ENCODE measurements at regions of chr2 and their contacts with region 1.

Region 1: DNA sequence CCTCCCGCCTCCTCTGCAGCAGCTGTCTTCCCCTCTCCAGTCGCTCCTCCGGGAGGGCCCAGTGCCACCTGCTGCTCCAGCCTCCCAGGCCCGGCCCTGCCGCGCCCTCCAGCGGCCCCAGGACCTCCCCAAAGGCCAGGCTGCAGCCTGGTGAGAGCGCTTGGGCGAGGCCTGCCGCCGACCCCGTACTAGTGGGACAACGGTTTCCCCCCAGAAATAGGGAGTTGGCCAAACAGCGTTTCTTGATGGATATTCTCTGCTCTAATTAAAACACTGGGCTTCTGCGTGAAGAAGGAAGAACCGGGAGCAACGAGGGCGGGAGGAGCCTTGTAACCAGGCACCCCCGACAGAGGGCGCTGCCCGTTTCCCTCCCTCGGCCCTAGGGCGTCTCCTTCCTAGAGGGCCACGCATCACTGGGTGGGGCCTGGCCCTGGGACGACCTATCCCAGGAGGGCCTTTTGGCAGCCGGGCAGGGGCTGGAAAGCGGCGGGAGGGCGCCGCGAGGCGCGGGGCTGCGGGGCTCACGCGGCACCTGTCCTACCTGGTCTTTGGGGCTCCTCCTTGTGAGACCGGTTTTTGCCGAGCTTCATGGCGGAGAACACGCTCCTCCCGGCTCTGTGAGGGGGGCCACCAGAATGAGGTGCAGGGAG is 25.4 kb upstream of the OTOF start:
- DNase-seq: peak; percentile 20 to 70
- ATAC-seq: peak; percentile 83 to 92
- H3K4me3 ChIP-seq: peak overlapping the region; percentile 37 to 66 (median 51)
- H3K27ac ChIP-seq: peak overlapping the region in 2 of 4 donors; percentile 40 to 48
- H3K4me1 ChIP-seq: peaks cover 3 to 10% of the 10 kb centered on the region in 2 donors
- H3K27me3 ChIP-seq: no peaks in the 10 kb centered on the region
- CTCF ChIP-seq: peak; percentile 65 to 87 (median 85)
- POLR2A ChIP-seq: no peak

Region 2: GRCh38 chr2:26359886-26360473 is 143.4 kb before region 1 on chr2:
- in situ Hi-C with region 1: no loop called
- intact Hi-C with region 1: loop called (anchors 2 kb)
- DNase-seq: no peak
- ATAC-seq: peak in 1 of 2 donors; percentile 26
- H3K4me3 ChIP-seq: no peak overlapping the region
- H3K27ac ChIP-seq: peak overlapping the region in 1 of 4 donors; percentile 7
- H3K4me1 ChIP-seq: peaks cover 27 to 33% of the 10 kb centered on the region in 2 donors
- H3K27me3 ChIP-seq: no peaks in the 10 kb centered on the region
- CTCF ChIP-seq: no peak
- POLR2A ChIP-seq: no peak

Region 3: DNA sequence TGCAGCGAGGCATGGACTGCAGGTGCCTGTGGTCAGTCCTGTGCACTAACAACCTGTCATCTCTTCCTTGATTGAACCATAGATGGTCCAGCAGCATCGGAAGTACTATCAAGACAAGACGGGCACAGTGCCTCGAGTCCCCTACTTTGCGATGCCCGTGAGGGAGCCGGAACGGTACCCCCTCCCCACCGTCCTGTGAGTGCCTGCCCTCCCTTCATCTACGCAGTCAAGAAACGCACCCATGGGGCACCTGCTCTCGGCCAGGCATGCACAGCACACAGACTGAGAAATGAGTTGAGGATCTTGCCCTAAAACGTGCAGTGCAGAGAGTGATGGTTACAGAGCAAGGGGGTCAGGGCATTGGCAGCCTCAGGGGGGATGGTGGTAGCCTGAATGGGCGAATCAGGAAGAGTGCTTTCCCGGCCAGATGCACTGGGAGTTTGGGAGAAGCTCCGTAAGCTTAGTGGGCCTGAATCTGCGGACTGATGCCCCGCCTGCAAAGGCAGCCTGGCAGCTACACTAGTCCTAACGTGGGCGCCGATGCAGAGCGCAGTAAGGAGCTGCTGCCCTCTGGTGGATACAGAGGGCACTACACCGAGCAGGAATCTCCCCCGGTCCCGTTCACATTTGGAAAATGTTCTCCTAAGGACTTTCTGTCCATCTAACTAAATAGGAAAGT is 74.2 kb after region 1 on chr2:
- in situ Hi-C with region 1: no loop called
- intact Hi-C with region 1: loop called (anchors 1 kb)
- DNase-seq: peak; percentile 29 to 42
- ATAC-seq: peak; percentile 80 to 95
- H3K4me3 ChIP-seq: no peak overlapping the region
- H3K27ac ChIP-seq: no peak overlapping the region
- H3K4me1 ChIP-seq: no peaks in the 10 kb centered on the region
- H3K27me3 ChIP-seq: no peaks in the 10 kb centered on the region
- CTCF ChIP-seq: peak; percentile 84 to 98 (median 89)
- POLR2A ChIP-seq: no peak

Region 4: DNA sequence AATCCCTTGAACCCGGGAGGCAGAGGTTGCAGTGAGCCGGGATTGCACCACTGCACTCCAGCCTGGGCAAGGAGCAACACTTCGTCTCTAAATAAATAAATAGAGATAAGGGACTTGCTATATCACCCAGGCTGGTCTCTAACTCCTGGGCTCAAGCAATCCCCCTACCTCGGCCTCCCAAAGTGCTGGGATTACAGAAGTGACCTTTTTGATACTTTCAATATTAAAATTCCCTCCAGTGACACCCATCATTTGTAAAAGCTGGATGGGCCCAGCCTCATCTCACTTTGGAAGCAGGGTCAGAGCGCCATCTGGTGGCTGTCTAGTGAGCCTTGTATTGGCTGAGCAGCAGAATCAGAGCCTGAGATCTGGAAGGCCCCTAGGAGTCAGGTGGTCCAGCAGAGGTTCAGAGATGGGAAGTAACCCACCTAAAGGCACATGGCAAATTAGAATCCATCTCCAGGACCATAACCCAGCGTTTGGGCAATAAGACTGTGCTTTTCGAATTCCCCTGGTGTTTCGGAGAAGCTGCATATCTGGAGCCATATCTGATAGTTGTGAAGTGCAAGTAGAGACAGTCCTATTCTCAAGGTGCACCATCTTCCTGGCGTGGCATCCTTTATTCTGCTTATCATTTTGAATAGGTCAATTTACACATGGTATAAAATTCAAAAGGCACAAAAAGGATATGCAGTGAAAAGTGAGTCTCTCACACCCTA is 242.4 kb after region 1 on chr2:
- in situ Hi-C with region 1: no loop called
- intact Hi-C with region 1: loop called (anchors 5 kb)
- DNase-seq: peak; percentile 50 to 69
- ATAC-seq: peak; percentile 81 to 85
- H3K4me3 ChIP-seq: no peak overlapping the region
- H3K27ac ChIP-seq: no peak overlapping the region
- H3K4me1 ChIP-seq: peaks cover 0 to 8% of the 10 kb centered on the region in 2 donors
- H3K27me3 ChIP-seq: no peaks in the 10 kb centered on the region
- CTCF ChIP-seq: peak; percentile 80 to 94 (median 91)
- POLR2A ChIP-seq: no peak

Region 5: GRCh38 chr2:27185331-27186026 is 682.1 kb after region 1 on chr2:
- in situ Hi-C with region 1: no loop called
- intact Hi-C with region 1: no loop called
- DNase-seq: peak; percentile 71 to 79
- ATAC-seq: peak; percentile 92 to 94
- H3K4me3 ChIP-seq: no peak overlapping the region
- H3K27ac ChIP-seq: peak overlapping the region; percentile 73 to 93 (median 82)
- H3K4me1 ChIP-seq: peaks cover 29 to 41% of the 10 kb centered on the region in 2 donors
- H3K27me3 ChIP-seq: no peaks in the 10 kb centered on the region
- CTCF ChIP-seq: no peak
- POLR2A ChIP-seq: no peak